ENCODE measurements at regions of chr2 and their contacts with region 1.

Region 1: DNA sequence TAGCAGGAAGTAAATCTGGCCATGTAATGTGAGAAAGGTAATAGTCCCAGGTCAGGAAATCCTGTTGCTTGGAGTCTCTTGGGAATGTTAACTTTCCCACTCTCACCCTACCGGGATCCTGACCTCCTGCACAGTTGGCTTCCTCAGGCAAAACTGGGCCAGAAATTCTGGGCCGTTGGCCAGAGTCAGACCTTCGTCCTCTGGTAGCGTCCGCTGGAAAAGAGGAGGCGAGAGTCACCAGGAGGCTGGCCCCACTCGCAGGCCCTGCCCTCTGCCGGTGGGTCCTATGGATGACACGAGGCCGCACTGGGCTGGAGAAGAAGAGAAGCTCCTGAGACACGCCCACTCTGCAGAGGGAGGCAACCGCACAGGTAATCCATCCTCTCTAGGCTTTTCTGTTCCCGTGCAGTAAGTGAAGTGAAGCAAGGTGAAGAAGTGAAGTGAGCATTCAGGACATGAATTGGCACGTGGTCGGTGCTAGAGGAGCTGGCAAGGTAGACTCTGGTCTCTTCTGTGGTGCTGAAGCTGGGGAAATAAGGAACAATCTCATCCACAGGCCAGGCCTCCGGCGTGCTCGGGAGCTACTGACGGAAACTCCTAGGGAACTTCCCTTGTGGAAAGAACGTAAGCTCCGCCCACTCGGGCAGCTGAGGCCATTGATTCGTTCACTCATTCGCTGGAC is 182.7 kb upstream of the GLI2 start:
- DNase-seq: peak; percentile 91
- ATAC-seq: peak; percentile 89

Region 2: DNA sequence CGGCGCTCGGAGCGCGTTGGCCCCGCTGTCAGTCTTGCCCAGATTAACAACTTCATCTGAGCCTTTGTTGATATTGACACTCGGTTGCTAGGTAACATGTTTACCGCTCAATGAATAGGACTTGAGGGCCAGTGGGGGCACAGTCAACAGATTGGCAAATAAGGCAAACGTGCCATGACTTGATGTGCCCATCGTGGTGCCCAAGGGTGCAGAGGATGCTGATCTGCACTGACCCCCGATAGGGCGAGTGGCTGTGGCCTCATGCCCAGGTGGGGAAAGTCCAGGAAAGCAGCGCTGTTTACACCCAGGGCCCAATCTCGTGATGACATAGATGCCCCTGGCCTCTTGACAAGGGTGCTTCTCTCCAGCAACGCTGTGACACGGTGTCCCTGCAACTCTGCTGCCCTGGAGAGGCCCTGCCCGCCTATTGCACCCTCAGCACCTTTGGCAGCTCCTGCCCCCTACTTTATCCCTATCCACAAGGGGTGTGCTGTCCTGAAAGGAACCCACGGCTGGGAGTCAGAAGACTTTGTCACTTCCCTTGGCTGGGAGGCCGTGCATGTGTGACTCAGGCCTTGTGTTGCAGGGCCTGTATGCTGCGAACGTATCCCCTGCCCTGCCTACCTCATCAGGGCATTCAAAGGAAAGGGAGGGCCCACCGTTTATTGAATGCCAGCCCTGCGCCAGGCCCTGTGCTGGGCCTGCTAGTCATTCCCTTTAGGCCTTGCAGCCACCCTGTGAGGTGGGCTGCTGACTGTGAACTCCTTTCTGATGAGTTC is 49.0 kb before region 1 on chr2:
- intact Hi-C with region 1: loop called (anchors 2 kb)
- DNase-seq: peak; percentile 83
- ATAC-seq: peak; percentile 95

Region 3: GRCh38 chr2:120566331-120567035 is 13.5 kb after region 1 on chr2:
- intact Hi-C with region 1: loop called (anchors 1 kb)
- DNase-seq: peak; percentile 89
- ATAC-seq: peak; percentile 93

Region 4: GRCh38 chr2:120620025-120620793 is 67.3 kb after region 1 on chr2:
- intact Hi-C with region 1: no loop called
- DNase-seq: no peak
- ATAC-seq: no peak

Region 5: DNA sequence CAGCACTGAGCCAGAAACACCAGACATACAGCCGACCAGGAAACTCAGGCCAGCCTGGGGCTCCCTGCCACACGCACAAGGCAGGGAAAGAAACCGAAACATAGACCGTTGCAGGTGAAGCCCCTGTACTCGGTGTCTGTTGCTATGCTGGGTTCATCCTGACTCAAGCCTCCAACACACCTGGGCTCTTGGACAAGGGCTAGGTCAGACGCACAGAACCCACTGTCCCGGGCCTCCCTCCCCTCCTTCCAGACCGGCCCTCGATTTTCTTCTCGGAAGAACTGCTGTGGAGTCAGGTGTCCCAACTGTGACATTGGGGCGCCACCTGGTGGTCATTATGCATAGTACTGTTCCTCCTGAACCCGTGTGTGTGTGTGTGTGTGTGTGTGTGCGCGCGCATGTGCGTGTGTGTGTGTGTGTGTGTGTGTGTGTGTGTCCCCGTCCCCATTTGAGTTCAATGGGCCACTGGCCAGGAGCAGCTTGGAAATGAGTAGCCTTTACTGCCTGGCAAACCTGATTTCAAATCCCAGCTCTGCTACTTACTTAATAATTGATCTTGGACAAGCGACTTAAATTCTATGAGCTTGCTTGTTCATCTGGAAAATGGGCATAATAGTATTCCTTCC is 127.3 kb after region 1 on chr2:
- intact Hi-C with region 1: loop called (anchors 5 kb)
- DNase-seq: peak; percentile 86
- ATAC-seq: peak; percentile 81